CD4-positive, alpha-beta T cell (primary cell): ENCODE measurements at regions of chr20 and their contacts with region 1.

Region 1: DNA sequence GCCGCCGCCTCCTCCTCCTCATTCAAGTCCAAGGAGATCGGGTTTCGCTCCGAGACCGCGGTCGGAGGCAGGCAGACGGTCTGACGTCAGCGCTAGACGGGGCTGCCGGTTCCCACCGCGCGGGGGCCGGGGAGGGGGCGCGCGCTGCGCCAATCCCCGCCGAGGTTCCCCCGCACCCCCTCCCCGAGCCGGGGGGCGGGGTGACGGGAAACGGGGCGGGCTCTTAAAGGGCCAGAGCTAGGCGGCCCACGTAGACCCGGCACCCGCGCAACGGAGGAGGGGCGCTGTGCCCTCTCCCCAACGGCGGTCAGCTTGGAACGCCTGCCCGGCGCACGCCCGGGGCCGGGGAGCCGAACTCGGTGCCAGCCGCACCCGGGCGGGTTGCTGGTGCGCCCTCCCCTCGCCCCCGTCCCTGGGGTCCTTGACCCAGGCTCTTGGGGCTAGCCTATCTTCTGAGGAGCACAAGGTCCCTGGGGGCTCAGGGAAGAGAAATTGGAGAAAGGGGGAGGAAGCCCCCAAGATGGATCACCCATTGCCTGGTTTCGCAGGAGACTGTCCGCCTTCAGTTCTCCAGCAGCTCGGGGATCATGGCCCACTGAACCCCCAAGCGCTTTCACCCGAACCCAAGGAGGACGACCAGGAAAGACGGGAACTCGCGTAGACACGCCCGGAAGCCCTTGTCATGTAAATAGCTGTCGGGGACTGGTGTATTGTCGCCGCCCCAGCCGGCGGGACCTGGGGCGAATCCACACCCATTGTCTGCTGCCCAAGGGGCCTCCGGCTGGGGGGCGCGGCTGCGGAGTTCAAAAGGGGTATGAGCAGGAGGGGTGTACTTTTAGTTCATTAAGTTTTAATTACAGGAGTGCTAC is at the start of gene PMEPA1:
- DNase-seq: peak; percentile 85 to 98 (median 94)
- ATAC-seq: peak; percentile 84
- H3K4me3 ChIP-seq: peak within 1 kb of the TSS; percentile 87
- H3K4me3 Mint-ChIP-seq: peak within 1 kb of the TSS; percentile 97
- H3K27ac ChIP-seq: peak within 1 kb of the TSS; percentile 75 to 84
- H3K27ac Mint-ChIP-seq: peak within 1 kb of the TSS; percentile 95
- H3K4me1 ChIP-seq: peaks cover 32% of the 10 kb centered on the region
- H3K4me1 Mint-ChIP-seq: peaks cover 50% of the 10 kb centered on the region
- H3K27me3 ChIP-seq: peaks cover 0 to 3% of the 10 kb centered on the region in 2 experiments
- H3K27me3 Mint-ChIP-seq: no peaks in the 10 kb centered on the region
- CTCF ChIP-seq: peak; percentile 1
- total RNA-seq, gene PMEPA1: 15.7 to 18.0 TPM

Region 2: DNA sequence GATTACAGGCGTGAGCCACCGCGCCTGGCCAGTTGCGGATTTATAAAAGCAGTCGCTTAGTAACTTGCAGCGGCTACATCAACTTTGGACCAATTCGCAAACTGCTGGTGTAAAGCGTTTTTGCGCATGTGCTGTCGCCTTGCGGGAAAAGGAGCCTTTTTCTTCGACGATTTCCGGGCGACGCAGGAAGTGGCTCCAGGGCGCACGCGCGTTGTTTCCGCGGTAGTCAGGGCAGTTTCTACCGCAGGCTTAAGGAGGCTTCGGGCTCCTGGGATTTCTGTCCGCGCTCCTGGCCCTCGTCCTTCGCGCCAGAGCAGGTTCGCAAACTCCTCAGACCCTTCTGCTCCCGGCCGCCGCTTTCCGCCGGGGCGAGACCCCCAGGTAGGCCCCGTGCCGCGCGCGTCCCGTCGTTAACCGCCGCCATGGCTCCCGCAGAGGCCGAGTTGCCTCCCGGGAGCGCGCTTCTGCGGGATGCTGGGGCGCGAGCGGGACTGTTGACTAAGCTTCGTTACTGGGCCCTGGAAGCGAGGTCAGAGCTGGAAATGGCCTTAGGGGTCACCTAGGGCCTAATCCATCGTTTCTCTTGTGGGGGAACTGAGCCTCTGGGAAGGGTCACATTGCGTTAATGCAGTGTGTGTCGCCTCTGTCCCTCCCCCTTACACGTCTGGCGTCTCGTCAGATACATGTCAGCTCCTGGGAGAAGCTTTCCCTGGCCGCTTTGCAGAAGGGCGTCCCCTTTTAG is 359.0 kb before region 1 on chr20 and contains the start of gene RAE1:
- CTCF ChIA-PET with region 1: no interaction called
- POLR2A ChIA-PET with region 1: no interaction called
- intact Hi-C with region 1: loop called in 1 of 2 experiments (anchors 5 kb)
- DNase-seq: peak; percentile 82 to 97 (median 89)
- ATAC-seq: peak; percentile 82
- H3K4me3 ChIP-seq: peak within 1 kb of the TSS; percentile 98
- H3K4me3 Mint-ChIP-seq: peak within 1 kb of the TSS; percentile 94
- H3K27ac ChIP-seq: peak within 1 kb of the TSS; percentile 73 to 74
- H3K27ac Mint-ChIP-seq: peak within 1 kb of the TSS; percentile 89
- H3K4me1 ChIP-seq: peaks cover 21% of the 10 kb centered on the region
- H3K4me1 Mint-ChIP-seq: peaks cover 55% of the 10 kb centered on the region
- H3K27me3 ChIP-seq: no peaks in the 10 kb centered on the region
- H3K27me3 Mint-ChIP-seq: no peaks in the 10 kb centered on the region
- CTCF ChIP-seq: no peak
- total RNA-seq, gene RAE1: 58.8 to 60.7 TPM

Region 3: GRCh38 chr20:57622579-57623377 is 87.4 kb before region 1 on chr20:
- CTCF ChIA-PET with region 1: interaction called, 8 read pairs
- POLR2A ChIA-PET with region 1: interaction called, 29 read pairs
- intact Hi-C with region 1: loop called in 1 of 2 experiments (anchors 5 kb)
- DNase-seq: peak; percentile 65 to 85 (median 74)
- ATAC-seq: peak; percentile 53
- H3K4me3 ChIP-seq: no peak overlapping the region
- H3K4me3 Mint-ChIP-seq: peak overlapping the region; percentile 87
- H3K27ac ChIP-seq: no peak overlapping the region
- H3K27ac Mint-ChIP-seq: peak overlapping the region; percentile 84
- H3K4me1 ChIP-seq: peaks cover 71% of the 10 kb centered on the region
- H3K4me1 Mint-ChIP-seq: peaks cover 88% of the 10 kb centered on the region
- H3K27me3 ChIP-seq: no peaks in the 10 kb centered on the region
- H3K27me3 Mint-ChIP-seq: no peaks in the 10 kb centered on the region
- CTCF ChIP-seq: peak; percentile 73

Region 4: DNA sequence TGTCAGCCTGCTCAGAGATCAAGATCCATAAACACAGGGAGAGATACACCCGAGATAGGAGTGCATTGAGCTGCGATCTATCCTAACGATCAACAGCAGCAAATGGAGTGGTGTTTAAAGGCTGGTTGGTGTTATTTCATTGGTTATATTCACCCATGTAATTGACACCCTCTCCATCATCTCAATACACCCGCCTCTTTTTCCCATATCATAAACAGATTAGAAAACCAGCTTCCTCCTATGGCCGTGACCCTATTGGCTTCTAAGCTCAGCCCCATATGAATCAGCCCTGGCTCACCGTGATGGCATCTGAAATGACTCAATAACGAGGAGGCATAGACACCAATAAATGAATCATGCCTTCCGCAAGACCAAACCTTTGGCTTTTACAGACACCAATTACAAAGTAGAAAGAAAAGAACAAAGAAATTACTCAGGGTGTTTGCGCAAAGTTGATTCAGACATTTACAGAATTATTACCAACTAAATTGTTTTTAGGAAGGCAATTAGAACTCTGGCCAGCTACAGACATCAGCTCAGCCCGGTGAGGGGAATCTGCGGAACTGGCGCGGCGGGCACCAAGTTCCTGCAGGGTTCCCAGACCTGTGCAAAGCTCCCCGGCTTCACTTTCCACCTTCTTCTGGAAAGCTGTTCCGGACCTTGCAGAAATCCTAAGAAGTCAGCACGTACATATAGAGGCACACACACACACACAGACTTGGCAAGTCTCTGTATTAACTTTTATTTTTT is 11.9 kb before region 1 on chr20:
- CTCF ChIA-PET with region 1: interaction called, 7 read pairs
- POLR2A ChIA-PET with region 1: interaction called, 11 read pairs
- intact Hi-C with region 1: no loop called
- DNase-seq: peak in 11 of 14 experiments; percentile 20 to 67 (median 43)
- ATAC-seq: peak; percentile 63
- H3K4me3 ChIP-seq: no peak overlapping the region
- H3K4me3 Mint-ChIP-seq: no peak overlapping the region
- H3K27ac ChIP-seq: no peak overlapping the region
- H3K27ac Mint-ChIP-seq: no peak overlapping the region
- H3K4me1 ChIP-seq: no peaks in the 10 kb centered on the region
- H3K4me1 Mint-ChIP-seq: peaks cover 17% of the 10 kb centered on the region
- H3K27me3 ChIP-seq: no peaks in the 10 kb centered on the region
- H3K27me3 Mint-ChIP-seq: no peaks in the 10 kb centered on the region
- CTCF ChIP-seq: no peak

Region 5: GRCh38 chr20:57738481-57738880 is 28.3 kb after region 1 on chr20:
- CTCF ChIA-PET with region 1: no interaction called
- POLR2A ChIA-PET with region 1: no interaction called
- intact Hi-C with region 1: no loop called
- DNase-seq: no peak
- ATAC-seq: no peak
- H3K4me3 ChIP-seq: no peak overlapping the region
- H3K4me3 Mint-ChIP-seq: no peak overlapping the region
- H3K27ac ChIP-seq: no peak overlapping the region
- H3K27ac Mint-ChIP-seq: no peak overlapping the region
- H3K4me1 ChIP-seq: no peaks in the 10 kb centered on the region
- H3K4me1 Mint-ChIP-seq: no peaks in the 10 kb centered on the region
- H3K27me3 ChIP-seq: peaks cover 3 to 5% of the 10 kb centered on the region in 2 experiments
- H3K27me3 Mint-ChIP-seq: peaks cover 14% of the 10 kb centered on the region
- CTCF ChIP-seq: no peak

Region 6: DNA sequence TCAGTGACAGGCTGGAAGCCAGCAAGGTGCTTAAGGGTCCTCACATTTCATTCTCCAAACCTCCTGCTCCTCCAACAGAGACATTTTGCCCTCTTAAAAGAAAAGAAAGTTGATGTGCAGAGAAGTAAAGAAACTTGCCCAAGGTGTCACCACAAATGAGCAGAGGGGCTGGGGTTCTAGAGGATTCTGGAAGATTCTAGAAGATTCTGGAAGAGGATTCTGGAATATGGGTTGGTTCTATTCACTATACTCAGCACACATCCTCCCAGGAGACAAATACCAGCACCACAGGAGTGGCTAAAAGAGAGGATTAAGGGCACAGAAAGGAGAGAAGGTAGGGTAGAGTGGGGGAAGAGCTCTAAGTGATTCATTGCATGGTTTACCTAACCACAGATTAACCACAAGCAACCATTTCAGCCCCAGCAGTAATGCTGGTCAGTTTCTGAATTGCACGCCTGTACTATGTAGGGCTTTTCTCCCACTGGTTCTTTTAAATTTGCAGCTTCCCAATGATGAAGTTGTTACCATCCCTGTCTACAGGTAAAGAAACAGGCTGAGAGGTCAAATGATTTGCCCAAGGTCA is 192.2 kb after region 1 on chr20:
- CTCF ChIA-PET with region 1: no interaction called
- POLR2A ChIA-PET with region 1: no interaction called
- intact Hi-C with region 1: no loop called
- DNase-seq: no peak
- ATAC-seq: no peak
- H3K4me3 ChIP-seq: no peak overlapping the region
- H3K4me3 Mint-ChIP-seq: no peak overlapping the region
- H3K27ac ChIP-seq: no peak overlapping the region
- H3K27ac Mint-ChIP-seq: no peak overlapping the region
- H3K4me1 ChIP-seq: no peaks in the 10 kb centered on the region
- H3K4me1 Mint-ChIP-seq: no peaks in the 10 kb centered on the region
- H3K27me3 ChIP-seq: peaks cover 7 to 8% of the 10 kb centered on the region in 2 experiments
- H3K27me3 Mint-ChIP-seq: peaks cover 17% of the 10 kb centered on the region
- CTCF ChIP-seq: no peak

Region 7: DNA sequence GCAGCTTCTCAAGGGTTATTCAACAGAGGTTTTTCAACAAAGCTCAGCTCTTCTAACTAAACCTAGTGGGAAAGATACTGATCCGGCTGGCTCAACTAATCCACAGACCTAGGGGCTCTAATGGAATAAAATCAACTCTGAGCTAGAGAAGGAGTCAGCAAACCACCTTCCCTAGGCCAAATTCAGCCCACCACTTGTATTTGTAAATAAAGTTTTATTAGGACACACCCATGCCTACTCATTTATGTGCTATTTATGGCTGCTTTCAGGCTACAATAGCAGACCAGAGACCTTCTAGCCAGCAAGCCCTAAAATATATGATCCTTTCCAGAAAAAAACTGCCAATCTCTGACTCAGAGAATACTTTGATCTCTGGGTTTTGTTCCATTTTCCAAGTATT is 593.4 kb after region 1 on chr20:
- CTCF ChIA-PET with region 1: no interaction called
- POLR2A ChIA-PET with region 1: no interaction called
- intact Hi-C with region 1: loop called in 1 of 2 experiments (anchors 5 kb)
- DNase-seq: no peak
- ATAC-seq: no peak
- H3K4me3 ChIP-seq: no peak overlapping the region
- H3K4me3 Mint-ChIP-seq: no peak overlapping the region
- H3K27ac ChIP-seq: no peak overlapping the region
- H3K27ac Mint-ChIP-seq: peak overlapping the region; percentile 98
- H3K4me1 ChIP-seq: peaks cover 27% of the 10 kb centered on the region
- H3K4me1 Mint-ChIP-seq: peaks cover 51% of the 10 kb centered on the region
- H3K27me3 ChIP-seq: no peaks in the 10 kb centered on the region
- H3K27me3 Mint-ChIP-seq: no peaks in the 10 kb centered on the region
- CTCF ChIP-seq: no peak

Region 8: DNA sequence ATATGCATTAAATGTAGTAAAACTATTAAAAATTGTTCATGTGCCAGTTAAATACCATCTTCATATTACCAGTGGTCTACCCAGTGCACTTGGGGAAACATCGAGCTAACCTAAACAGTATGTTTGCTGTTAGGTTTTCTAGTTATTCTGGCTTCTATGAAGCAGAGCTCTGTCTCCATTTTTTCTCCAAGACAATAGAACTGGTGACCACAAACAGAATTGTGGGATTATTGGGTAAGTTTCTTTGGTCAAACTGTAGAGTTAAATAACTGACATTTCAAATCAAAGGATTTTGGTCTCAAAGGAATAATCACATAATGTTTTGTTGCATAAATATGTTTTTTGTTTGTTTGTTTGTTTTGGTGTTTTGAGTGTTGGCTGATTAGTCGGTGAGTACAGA is 1549.8 kb after region 1 on chr20:
- CTCF ChIA-PET with region 1: no interaction called
- POLR2A ChIA-PET with region 1: no interaction called
- intact Hi-C with region 1: loop called in 1 of 2 experiments (anchors 5 kb)
- DNase-seq: no peak
- ATAC-seq: no peak
- H3K4me3 ChIP-seq: no peak overlapping the region
- H3K4me3 Mint-ChIP-seq: no peak overlapping the region
- H3K27ac ChIP-seq: no peak overlapping the region
- H3K27ac Mint-ChIP-seq: peak overlapping the region; percentile 80
- H3K4me1 ChIP-seq: peaks cover 6% of the 10 kb centered on the region
- H3K4me1 Mint-ChIP-seq: peaks cover 64% of the 10 kb centered on the region
- H3K27me3 ChIP-seq: no peaks in the 10 kb centered on the region
- H3K27me3 Mint-ChIP-seq: no peaks in the 10 kb centered on the region
- CTCF ChIP-seq: no peak